Activated CD4-positive, alpha-beta memory T cell treated with anti-CD3 and anti-CD28 coated beads for 36 hours (primary cell): ENCODE measurements at regions of chr1 and their contacts with region 1.

Region 1: DNA sequence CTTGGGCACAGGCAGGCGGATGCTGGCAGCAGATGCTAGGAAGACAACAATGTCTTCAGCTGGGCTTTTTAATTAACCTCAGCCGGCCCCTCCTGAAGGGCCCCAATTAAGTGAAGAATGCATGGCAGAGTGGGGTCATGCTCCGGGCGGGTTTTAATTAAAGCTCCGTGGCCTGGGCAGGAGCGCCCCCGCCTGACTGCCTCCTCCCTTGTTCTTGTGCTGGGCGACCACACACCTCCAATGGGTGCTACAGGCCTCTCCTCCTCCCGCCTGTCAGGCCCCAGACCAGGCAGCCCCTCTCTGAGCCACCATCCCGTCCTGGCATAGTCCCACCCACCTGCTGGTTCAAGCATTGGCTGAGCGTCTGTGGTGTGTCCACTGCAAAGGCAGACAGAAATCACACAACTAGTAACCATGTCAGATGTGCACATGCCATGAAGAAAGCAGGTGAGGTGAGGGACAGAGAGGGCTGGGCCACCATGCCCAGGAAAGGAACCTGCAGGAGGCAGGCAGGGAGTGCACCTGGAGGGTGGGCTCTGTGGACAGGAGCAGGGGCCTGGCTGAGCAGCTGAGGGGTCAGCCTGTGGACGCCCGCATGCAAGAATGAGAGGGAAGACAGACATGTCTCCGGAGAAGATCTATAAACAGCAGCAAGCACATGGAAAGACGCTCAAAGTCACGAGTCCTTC is 8.5 kb upstream of the ARF1 start:
- DNase-seq: peak; percentile 27
- H3K4me3 Mint-ChIP-seq: no peak overlapping the region
- H3K27ac Mint-ChIP-seq: no peak overlapping the region
- H3K4me1 Mint-ChIP-seq: no peaks in the 10 kb centered on the region
- H3K27me3 Mint-ChIP-seq: no peaks in the 10 kb centered on the region

Region 2: DNA sequence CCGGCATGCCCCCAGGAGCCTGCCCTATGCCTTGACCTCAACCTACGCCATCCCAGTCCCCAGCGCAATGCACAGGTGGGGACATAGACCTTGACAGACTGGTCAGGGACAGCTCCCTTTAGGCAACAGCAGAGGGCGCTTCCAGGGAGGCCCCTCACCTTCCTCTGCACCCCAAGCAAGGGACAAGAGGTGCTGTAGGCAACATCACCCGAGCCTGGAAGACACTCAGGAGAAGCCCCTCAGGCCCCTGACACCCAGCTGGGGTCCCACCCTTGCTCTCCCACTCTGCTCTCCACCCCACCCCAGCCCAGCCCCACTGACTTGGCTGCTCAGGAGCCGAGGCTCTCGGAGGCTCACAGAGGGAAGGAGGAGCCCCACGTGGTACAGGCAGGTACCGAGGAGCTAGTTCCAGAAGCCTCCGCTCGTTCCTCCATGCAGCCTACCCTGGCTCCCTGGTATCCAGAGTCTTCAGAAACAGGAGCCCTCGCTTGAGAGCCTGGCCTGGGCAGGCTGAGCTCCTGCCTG is 69.6 kb before region 1 on chr1:
- CTCF ChIA-PET with region 1: no interaction called
- POLR2A ChIA-PET with region 1: no interaction called
- intact Hi-C with region 1: loop called (anchors 5 kb)
- DNase-seq: no peak
- H3K4me3 Mint-ChIP-seq: no peak overlapping the region
- H3K27ac Mint-ChIP-seq: no peak overlapping the region
- H3K4me1 Mint-ChIP-seq: peaks cover 10% of the 10 kb centered on the region
- H3K27me3 Mint-ChIP-seq: peaks cover 53% of the 10 kb centered on the region